ENCODE measurements at regions of chr1 and their contacts with region 1.

Region 1: GRCh38 chr1:52141513-52142219 is at the start of gene ZFYVE9:
- DNase-seq: peak; percentile 88 to 90 (median 88)
- ATAC-seq: peak; percentile 95
- H3K4me3 ChIP-seq: peak within 1 kb of the TSS; percentile 88
- H3K27ac ChIP-seq: peak within 1 kb of the TSS; percentile 80
- H3K4me1 ChIP-seq: peaks cover 19% of the 10 kb centered on the region in 2 experiments
- H3K27me3 ChIP-seq: no peaks in the 10 kb centered on the region
- CTCF ChIP-seq: peak; percentile 60 to 98 (median 87)
- EP300 ChIP-seq: no peak
- POLR2A ChIP-seq: peak; percentile 66
- RAD21 ChIP-seq: peak; percentile 86 to 92
- polyA plus RNA-seq, gene ZFYVE9: 0.52 to 0.84 TPM

Region 2: GRCh38 chr1:52022133-52022532 is 119.5 kb before region 1 on chr1:
- CTCF ChIA-PET with region 1: no interaction called
- POLR2A ChIA-PET with region 1: no interaction called
- in situ Hi-C with region 1: no loop called
- intact Hi-C with region 1: no loop called
- DNase-seq: no peak
- ATAC-seq: no peak
- H3K4me3 ChIP-seq: no peak overlapping the region
- H3K27ac ChIP-seq: no peak overlapping the region
- H3K4me1 ChIP-seq: no peaks in the 10 kb centered on the region
- H3K27me3 ChIP-seq: no peaks in the 10 kb centered on the region
- CTCF ChIP-seq: no peak
- EP300 ChIP-seq: no peak
- POLR2A ChIP-seq: no peak
- RAD21 ChIP-seq: no peak

Region 3: GRCh38 chr1:52153898-52154297 is 12.2 kb after region 1 on chr1:
- CTCF ChIA-PET with region 1: no interaction called
- POLR2A ChIA-PET with region 1: interaction called, 15 read pairs
- in situ Hi-C with region 1: no loop called
- intact Hi-C with region 1: no loop called
- DNase-seq: no peak
- ATAC-seq: no peak
- H3K4me3 ChIP-seq: no peak overlapping the region
- H3K27ac ChIP-seq: no peak overlapping the region
- H3K4me1 ChIP-seq: peaks cover 4 to 8% of the 10 kb centered on the region in 2 experiments; a peak in 4 of 5 replicates
- H3K27me3 ChIP-seq: no peaks in the 10 kb centered on the region
- CTCF ChIP-seq: no peak
- EP300 ChIP-seq: no peak
- POLR2A ChIP-seq: no peak
- RAD21 ChIP-seq: no peak

Region 4: GRCh38 chr1:52225174-52225573 is 83.5 kb after region 1 on chr1:
- CTCF ChIA-PET with region 1: no interaction called
- POLR2A ChIA-PET with region 1: no interaction called
- in situ Hi-C with region 1: no loop called
- intact Hi-C with region 1: loop called (anchors 5 kb)
- DNase-seq: no peak
- ATAC-seq: no peak; the same call in 2 of the 3 replicates
- H3K4me3 ChIP-seq: no peak overlapping the region
- H3K27ac ChIP-seq: no peak overlapping the region
- H3K4me1 ChIP-seq: no peaks in the 10 kb centered on the region; a peak in 2 of 5 replicates
- H3K27me3 ChIP-seq: no peaks in the 10 kb centered on the region
- CTCF ChIP-seq: no peak
- EP300 ChIP-seq: no peak
- POLR2A ChIP-seq: no peak
- RAD21 ChIP-seq: no peak

Region 5: DNA sequence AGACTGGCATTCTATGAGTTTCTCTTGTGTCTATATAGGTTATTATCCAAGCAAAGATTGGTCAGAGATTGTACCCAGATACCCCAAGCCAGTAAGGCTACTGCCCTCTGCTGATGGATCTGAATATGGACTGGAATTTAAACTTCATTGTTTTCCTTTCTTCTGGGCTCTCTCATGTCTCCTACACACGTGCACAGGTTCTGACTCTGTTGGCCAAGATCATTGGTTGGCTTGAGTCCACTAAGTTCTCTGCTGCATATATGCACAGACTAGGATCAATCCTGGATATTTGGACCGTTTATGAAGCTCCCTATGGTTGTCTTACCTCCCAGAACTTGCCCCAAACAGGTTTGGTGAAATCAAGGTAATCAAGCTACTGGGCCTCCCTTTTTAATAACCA is 154.7 kb after region 1 on chr1:
- CTCF ChIA-PET with region 1: interaction called, 15 read pairs
- POLR2A ChIA-PET with region 1: no interaction called
- in situ Hi-C with region 1: no loop called
- intact Hi-C with region 1: loop called (anchors 1 kb)
- DNase-seq: peak; percentile 48 to 73 (median 59)
- ATAC-seq: peak; percentile 96
- H3K4me3 ChIP-seq: no peak overlapping the region
- H3K27ac ChIP-seq: no peak overlapping the region
- H3K4me1 ChIP-seq: no peaks in the 10 kb centered on the region
- H3K27me3 ChIP-seq: no peaks in the 10 kb centered on the region
- CTCF ChIP-seq: peak; percentile 79 to 96 (median 80)
- EP300 ChIP-seq: no peak
- POLR2A ChIP-seq: no peak
- RAD21 ChIP-seq: peak; percentile 95 to 98

Region 6: GRCh38 chr1:52328615-52329014 is 186.9 kb after region 1 on chr1:
- CTCF ChIA-PET with region 1: no interaction called
- POLR2A ChIA-PET with region 1: interaction called, 5 read pairs
- in situ Hi-C with region 1: no loop called
- intact Hi-C with region 1: loop called (anchors 1 kb)
- DNase-seq: peak in 1 of 4 experiments; percentile 12
- ATAC-seq: no peak
- H3K4me3 ChIP-seq: no peak overlapping the region
- H3K27ac ChIP-seq: peak overlapping the region; percentile 41; the same call in 1 of the 3 replicates
- H3K4me1 ChIP-seq: peaks cover 7 to 10% of the 10 kb centered on the region in 2 experiments; a peak in 3 of 5 replicates
- H3K27me3 ChIP-seq: no peaks in the 10 kb centered on the region
- CTCF ChIP-seq: no peak
- EP300 ChIP-seq: no peak
- POLR2A ChIP-seq: no peak
- RAD21 ChIP-seq: no peak

Region 7: GRCh38 chr1:52365746-52366516 is 224.3 kb after region 1 on chr1 and contains the start of gene CC2D1B:
- CTCF ChIA-PET with region 1: no interaction called
- POLR2A ChIA-PET with region 1: interaction called, 3 read pairs
- in situ Hi-C with region 1: no loop called
- intact Hi-C with region 1: loop called (anchors 2 kb)
- DNase-seq: peak; percentile 100
- ATAC-seq: peak; percentile 96
- H3K4me3 ChIP-seq: peak within 1 kb of the TSS; percentile 77
- H3K27ac ChIP-seq: peak within 1 kb of the TSS; percentile 93
- H3K4me1 ChIP-seq: peaks cover 21 to 37% of the 10 kb centered on the region in 2 experiments
- H3K27me3 ChIP-seq: no peaks in the 10 kb centered on the region
- CTCF ChIP-seq: peak in 2 of 3 experiments; percentile 21 to 27; a peak in 4 of 6 replicates
- EP300 ChIP-seq: peak; percentile 18; the same call in 1 of the 2 replicates
- POLR2A ChIP-seq: peak; percentile 93
- RAD21 ChIP-seq: peak in 1 of 2 experiments; percentile 15; a peak in 1 of 4 replicates
- polyA plus RNA-seq, gene CC2D1B: 1.2 to 1.5 TPM

Region 8: GRCh38 chr1:52697795-52698674 is 556.4 kb after region 1 on chr1 and contains the start of gene COA7:
- CTCF ChIA-PET with region 1: no interaction called
- POLR2A ChIA-PET with region 1: no interaction called
- in situ Hi-C with region 1: loop called (anchors 25 kb)
- intact Hi-C with region 1: no loop called
- DNase-seq: peak; percentile 93 to 96 (median 94)
- ATAC-seq: peak; percentile 90
- H3K4me3 ChIP-seq: peak within 1 kb of the TSS; percentile 82
- H3K27ac ChIP-seq: peak within 1 kb of the TSS; percentile 96
- H3K4me1 ChIP-seq: peaks cover 7 to 13% of the 10 kb centered on the region in 2 experiments; a peak in 4 of 5 replicates
- H3K27me3 ChIP-seq: no peaks in the 10 kb centered on the region
- CTCF ChIP-seq: no peak; a peak in 1 of 6 replicates
- EP300 ChIP-seq: no peak
- POLR2A ChIP-seq: peak; percentile 92
- RAD21 ChIP-seq: 0 out of 4 replicates have a peak, but pooled peaks of 1 of the 2 experiments have one; percentile 1
- polyA plus RNA-seq, gene COA7: 59.6 to 82.8 TPM